GM10248 (cell line): ENCODE measurements at regions of chr3 and their contacts with region 1.

Region 1: DNA sequence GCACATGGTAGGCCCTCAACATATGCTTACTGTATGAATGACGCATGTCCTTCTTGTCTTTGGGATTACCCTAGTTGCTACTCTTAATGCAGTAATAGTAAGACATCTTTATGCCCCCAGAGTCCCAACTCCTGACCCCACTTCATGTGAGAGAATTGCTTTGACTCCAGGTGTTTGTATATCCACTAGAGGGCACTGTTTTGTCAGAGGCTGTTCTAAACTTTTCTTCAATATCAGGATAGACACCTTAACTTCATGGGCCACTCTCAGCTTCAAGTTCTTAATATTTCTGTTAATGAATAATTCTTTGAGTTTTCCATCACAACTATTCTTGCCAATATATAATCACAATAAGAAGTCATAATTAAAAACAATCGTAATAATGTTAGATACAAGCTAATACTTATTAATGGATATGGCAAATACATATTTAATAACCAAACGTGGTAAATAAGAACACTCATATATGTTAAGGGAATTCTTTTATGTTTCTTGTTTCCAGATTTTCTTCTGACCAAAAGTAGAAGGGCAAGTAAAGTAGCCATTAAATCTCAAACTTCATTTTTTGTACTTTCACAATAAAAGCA is 337.2 kb upstream of the DNAJC19 start:
- DNase-seq: peak; percentile 34
- CTCF ChIP-seq: peak; percentile 65

Region 2: DNA sequence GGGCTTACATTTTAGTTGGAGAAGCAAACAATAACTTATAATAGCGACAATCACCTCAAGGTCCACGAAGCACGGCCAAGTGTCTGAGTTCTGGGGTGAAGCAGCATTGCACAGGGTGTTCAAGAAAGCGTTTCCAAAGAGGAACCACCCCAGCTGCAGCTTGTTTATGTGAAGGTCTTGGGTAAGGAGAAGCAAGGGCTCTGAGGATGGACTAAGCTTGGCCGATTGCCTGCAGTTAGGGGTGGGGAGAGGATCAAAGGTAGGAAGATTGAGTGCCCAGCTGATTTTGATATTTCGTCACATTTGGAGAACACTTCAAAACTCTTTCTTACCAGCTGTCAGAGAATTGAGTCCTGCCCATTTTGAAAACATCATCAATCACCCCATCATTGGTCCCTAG is 15.5 kb before region 1 on chr3:
- CTCF ChIA-PET with region 1: interaction called, 17 read pairs
- POLR2A ChIA-PET with region 1: no interaction called
- DNase-seq: no peak
- CTCF ChIP-seq: no peak

Region 3: GRCh38 chr3:181316486-181316885 is 10.2 kb before region 1 on chr3:
- CTCF ChIA-PET with region 1: interaction called, 17 read pairs
- POLR2A ChIA-PET with region 1: no interaction called
- DNase-seq: no peak
- CTCF ChIP-seq: no peak

Region 4: GRCh38 chr3:181344331-181344730 is 17.6 kb after region 1 on chr3:
- CTCF ChIA-PET with region 1: interaction called, 13 read pairs
- POLR2A ChIA-PET with region 1: no interaction called
- DNase-seq: no peak
- CTCF ChIP-seq: no peak

Region 5: GRCh38 chr3:181470349-181470748 is 143.6 kb after region 1 on chr3:
- CTCF ChIA-PET with region 1: no interaction called
- POLR2A ChIA-PET with region 1: no interaction called
- DNase-seq: no peak
- CTCF ChIP-seq: no peak